Activated T-helper 1 cell treated with anti-CD3 and anti-CD28 coated beads, Interleukin-12 subunit alpha, Interleukin-12 subunit beta, Interleukin-2, Interleukin-4 antibody, amounts not matched to agents 30 ng/mL and 10 ng/mL and 1 ng/mL, durations not matched to agents 14 hours and 24 hours and 36 hours (primary cell): ENCODE measurements at regions of chr19 and their contacts with region 1.

Region 1: DNA sequence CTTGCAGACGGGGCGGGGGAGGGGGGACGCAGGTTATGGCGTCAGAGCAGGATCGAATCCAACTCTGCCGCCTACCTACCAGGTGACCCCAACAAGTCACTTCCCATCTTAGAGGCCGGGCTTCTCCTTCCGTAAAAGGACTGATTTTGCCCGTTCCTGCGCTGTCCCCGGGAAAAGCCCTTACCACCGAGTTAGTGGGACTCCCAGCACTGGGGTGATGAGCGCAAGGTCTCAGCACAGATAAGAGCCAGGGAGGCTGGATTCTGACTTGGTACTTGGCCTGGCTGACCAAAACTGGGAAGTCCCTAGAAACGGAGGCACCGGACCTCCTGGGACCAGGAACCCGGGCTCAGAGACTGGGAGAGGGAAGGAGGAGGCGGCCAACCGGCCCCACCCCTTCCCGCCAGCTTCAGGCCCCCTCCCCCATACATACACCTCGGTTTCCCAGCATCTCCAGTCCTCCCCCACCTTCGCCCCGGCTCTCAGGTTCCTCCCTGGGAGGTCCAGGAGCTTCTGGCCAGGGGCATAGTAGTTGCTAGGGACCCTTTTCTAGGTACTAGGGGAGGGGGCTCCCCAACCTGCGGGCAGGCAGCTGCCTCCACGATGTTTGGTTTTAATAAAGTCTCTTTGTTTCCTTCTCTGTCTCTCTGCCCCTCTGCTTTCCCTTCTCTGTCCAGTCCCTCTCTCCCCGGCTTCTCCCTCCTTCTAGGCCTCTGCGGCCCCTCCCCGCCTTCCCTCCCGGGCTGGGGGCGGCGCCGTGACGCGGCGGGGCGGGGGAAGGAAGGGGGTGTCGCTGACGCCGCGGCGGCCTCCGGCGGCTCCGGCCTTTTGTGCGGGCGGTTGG is at the start of gene GRAMD1A:
- DNase-seq: peak; percentile 71
- H3K4me3 Mint-ChIP-seq: peak within 1 kb of the TSS; percentile 98
- H3K27ac Mint-ChIP-seq: peak within 1 kb of the TSS; percentile 96
- H3K4me1 Mint-ChIP-seq: peaks cover 59% of the 10 kb centered on the region
- H3K27me3 Mint-ChIP-seq: no peaks in the 10 kb centered on the region
- total RNA-seq, gene GRAMD1A: 176 and 189 TPM in 2 replicates

Region 2: DNA sequence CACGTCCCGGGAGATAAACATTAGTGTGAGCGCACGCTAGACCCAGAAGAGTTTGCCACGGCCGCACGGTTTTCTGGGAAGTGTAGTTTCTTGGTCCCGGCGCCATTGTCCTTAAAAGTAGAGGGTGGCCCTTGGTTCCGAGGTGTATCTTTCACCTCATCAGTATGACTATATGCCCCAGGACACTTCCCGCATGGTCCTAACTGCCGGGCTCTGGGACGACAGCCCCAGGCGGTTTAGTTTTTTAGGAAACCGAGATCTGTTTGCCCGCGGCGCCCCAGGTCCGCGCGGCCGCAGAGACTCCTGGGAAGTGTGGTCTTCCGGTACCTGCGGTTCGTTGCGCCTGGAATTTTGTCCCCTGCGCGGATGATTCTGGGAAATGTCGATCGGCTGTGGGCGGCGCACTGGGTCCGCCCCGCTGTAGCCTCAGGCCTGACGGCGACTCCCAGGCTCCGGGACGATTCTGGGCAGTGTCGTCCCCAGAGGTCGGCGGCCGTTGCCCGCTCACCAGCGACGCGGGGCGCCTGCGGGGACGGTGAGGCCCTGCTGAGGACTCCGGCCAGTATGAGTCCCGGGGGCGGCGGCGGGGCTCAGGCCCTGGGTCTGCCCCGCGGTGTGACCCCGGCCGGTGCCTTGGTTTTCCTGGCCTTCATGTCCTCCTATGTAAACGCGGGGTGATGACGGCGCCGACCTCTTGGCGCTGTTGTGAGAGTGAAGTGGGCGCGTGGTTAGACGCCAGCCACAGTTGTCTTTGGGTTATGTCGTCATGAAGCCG is 265.7 kb before region 1 on chr19 and contains the start of gene ZNF181:
- intact Hi-C with region 1: loop called (anchors 5 kb)
- DNase-seq: peak; percentile 72
- H3K4me3 Mint-ChIP-seq: peak within 1 kb of the TSS; percentile 92
- H3K27ac Mint-ChIP-seq: peak within 1 kb of the TSS; percentile 95
- H3K4me1 Mint-ChIP-seq: peaks cover 24% of the 10 kb centered on the region
- H3K27me3 Mint-ChIP-seq: no peaks in the 10 kb centered on the region
- total RNA-seq, gene ZNF181: 3.1 and 4.3 TPM in 2 replicates

Region 3: DNA sequence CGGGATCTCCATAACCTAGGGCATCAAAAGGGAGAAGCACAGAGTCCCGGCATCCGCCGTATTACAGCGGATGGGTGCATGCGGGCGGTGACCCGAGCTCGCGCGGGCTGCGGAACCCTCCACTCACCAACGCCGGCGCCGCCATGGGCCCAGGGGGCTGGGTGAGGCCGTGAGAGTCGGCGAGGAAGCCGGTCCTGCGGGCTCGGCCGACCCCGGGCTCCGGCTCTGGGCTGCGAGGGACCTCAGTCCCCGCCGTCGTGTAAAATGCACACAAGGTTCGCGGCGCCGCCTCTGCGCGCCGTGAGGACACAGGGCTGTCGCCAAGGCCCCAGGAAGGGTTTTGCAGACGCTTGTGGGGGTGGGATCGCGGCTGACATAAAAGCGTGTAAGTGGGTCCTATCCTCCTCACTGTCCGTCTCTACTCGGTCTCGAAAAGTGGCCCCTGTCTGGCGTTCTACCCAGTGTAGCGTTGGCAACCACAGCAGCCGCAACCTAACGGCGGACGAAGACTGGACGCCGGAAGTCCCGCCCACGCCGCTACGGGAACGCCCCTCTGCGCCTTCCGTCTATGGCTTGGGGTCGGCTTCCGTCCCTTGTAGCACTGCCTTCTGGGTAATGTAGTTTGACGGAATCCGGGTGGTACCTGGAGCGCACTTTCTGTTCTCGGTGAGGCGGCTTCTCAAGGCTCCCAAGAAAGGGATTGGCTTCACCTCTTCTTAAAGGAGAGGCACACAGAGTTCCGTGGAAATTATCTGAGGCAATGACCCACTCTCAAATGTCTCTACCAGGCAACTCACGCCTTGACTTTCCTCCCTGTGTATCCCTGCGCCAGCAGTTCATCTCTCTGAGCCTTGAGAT is 226.8 kb before region 1 on chr19 and contains the start of gene ZNF599:
- intact Hi-C with region 1: loop called (anchors 5 kb)
- DNase-seq: peak; percentile 85
- H3K4me3 Mint-ChIP-seq: peak within 1 kb of the TSS; percentile 91
- H3K27ac Mint-ChIP-seq: peak within 1 kb of the TSS; percentile 95
- H3K4me1 Mint-ChIP-seq: peaks cover 23% of the 10 kb centered on the region
- H3K27me3 Mint-ChIP-seq: no peaks in the 10 kb centered on the region
- total RNA-seq, gene ZNF599: 2.3 and 2.6 TPM in 2 replicates

Region 4: GRCh38 chr19:34793565-34793964 is 206.2 kb before region 1 on chr19:
- intact Hi-C with region 1: no loop called
- DNase-seq: no peak
- H3K4me3 Mint-ChIP-seq: no peak overlapping the region
- H3K27ac Mint-ChIP-seq: no peak overlapping the region
- H3K4me1 Mint-ChIP-seq: no peaks in the 10 kb centered on the region
- H3K27me3 Mint-ChIP-seq: no peaks in the 10 kb centered on the region

Region 5: GRCh38 chr19:34963573-34964409 is 35.9 kb before region 1 on chr19 and contains the start of gene ZNF792:
- intact Hi-C with region 1: loop called (anchors 5 kb)
- DNase-seq: peak; percentile 37
- H3K4me3 Mint-ChIP-seq: peak within 1 kb of the TSS; percentile 91
- H3K27ac Mint-ChIP-seq: peak within 1 kb of the TSS; percentile 83
- H3K4me1 Mint-ChIP-seq: peaks cover 22% of the 10 kb centered on the region
- H3K27me3 Mint-ChIP-seq: peaks cover 3% of the 10 kb centered on the region
- total RNA-seq, gene ZNF792: 6.5 and 6.8 TPM in 2 replicates

Region 6: GRCh38 chr19:34985249-34986022 is 14.3 kb before region 1 on chr19:
- intact Hi-C with region 1: loop called (anchors 1 kb)
- DNase-seq: no peak
- H3K4me3 Mint-ChIP-seq: peak overlapping the region; percentile 4
- H3K27ac Mint-ChIP-seq: peak overlapping the region; percentile 64
- H3K4me1 Mint-ChIP-seq: peaks cover 29% of the 10 kb centered on the region
- H3K27me3 Mint-ChIP-seq: peaks cover 6% of the 10 kb centered on the region

Region 7: GRCh38 chr19:35013031-35013819 is 13.5 kb after region 1 on chr19:
- intact Hi-C with region 1: loop called (anchors 1 kb)
- DNase-seq: peak; percentile 59
- H3K4me3 Mint-ChIP-seq: peak overlapping the region; percentile 57
- H3K27ac Mint-ChIP-seq: peak overlapping the region; percentile 74
- H3K4me1 Mint-ChIP-seq: peaks cover 49% of the 10 kb centered on the region
- H3K27me3 Mint-ChIP-seq: no peaks in the 10 kb centered on the region

Region 8: GRCh38 chr19:35236638-35237400 is 237.1 kb after region 1 on chr19:
- intact Hi-C with region 1: no loop called
- DNase-seq: no peak
- H3K4me3 Mint-ChIP-seq: no peak overlapping the region
- H3K27ac Mint-ChIP-seq: no peak overlapping the region
- H3K4me1 Mint-ChIP-seq: peaks cover 17% of the 10 kb centered on the region
- H3K27me3 Mint-ChIP-seq: peaks cover 7% of the 10 kb centered on the region

Region 9: GRCh38 chr19:35509861-35510625 is 510.3 kb after region 1 on chr19:
- intact Hi-C with region 1: no loop called
- DNase-seq: peak; percentile 46
- H3K4me3 Mint-ChIP-seq: peak overlapping the region; percentile 57
- H3K27ac Mint-ChIP-seq: no peak overlapping the region
- H3K4me1 Mint-ChIP-seq: peaks cover 6% of the 10 kb centered on the region
- H3K27me3 Mint-ChIP-seq: peaks cover 45% of the 10 kb centered on the region